Panc1 (cell line): ENCODE measurements at regions of chr11 and their contacts with region 1.

Region 1: DNA sequence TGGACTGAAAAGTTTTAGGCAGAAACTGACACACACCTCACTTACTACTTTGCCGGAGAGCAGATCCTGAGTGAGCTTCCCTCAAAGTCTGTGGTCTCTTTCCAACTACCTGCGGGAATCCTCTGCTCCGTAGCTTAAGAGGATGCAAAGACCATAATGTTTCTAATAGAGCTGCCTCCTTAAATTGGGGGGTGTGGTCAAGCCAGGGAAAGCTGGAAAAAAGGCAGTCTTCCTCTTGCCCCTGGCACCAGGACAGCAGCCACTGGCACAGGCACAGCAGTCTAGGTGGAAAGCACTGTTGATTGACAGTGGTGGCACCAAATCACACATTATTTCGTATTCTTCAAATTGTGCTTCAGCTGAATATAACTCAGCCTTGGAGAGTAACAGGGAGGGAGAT is at the start of gene ETS1:
- DNase-seq: no peak
- ATAC-seq: peak; percentile 66
- H3K4me3 ChIP-seq: peak within 1 kb of the TSS in 1 of 2 experiments; percentile 34; a peak in 2 of 4 replicates
- H3K27ac ChIP-seq: no peak within 1 kb of the TSS
- H3K4me1 ChIP-seq: no peaks in the 10 kb centered on the region
- H3K27me3 ChIP-seq: peaks cover 51% of the 10 kb centered on the region
- CTCF ChIP-seq: no peak
- total RNA-seq, gene ETS1: 66.4 TPM

Region 2: DNA sequence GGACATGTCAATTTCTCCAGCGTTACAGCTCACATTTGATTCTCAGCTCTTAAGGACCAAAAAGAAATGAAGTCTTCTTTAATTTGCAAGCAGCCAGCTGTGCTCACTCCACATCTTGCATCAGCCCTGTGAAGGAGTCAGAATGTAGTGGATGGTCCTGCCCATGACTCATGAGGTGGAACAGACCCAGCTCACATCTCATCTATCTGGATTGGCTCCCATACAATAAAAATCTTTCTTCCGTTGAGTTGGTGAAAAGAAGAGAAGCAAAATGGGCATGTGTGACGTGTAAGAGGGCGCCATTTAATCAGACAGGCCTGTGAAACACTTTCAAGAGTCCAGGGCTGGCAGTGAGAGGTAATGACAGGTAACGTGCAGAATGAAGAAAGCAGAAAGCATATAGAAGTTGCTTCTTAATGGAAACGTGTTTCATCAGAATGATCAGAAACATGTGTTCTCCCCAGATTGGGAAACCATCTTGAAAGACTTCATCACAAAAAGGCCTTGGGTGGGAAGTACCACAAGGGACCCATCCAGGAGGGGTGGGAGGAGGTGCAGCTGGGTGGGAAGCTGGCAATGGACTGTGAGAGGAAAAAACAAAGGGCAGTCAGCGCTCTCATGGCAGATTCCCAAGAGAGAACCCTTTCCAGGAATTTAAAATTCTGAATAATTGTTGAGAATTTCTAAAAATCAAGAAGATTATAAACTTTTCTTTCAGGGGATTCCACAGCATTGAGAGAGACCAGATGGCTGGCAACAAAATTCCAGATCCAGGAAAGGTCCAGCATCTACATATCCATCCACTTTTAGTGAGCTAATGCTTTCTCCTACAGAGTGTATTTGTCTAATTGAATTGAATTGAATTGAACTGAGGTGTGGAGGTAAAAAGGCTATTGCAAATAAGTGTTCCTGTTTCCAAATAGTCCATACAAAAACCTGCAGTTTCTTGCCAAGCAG is 57.1 kb before region 1 on chr11:
- CTCF ChIA-PET with region 1: no interaction called
- POLR2A ChIA-PET with region 1: no interaction called
- in situ Hi-C with region 1: no loop called
- intact Hi-C with region 1: loop called (anchors 2 kb)
- DNase-seq: no peak
- ATAC-seq: no peak
- H3K4me3 ChIP-seq: no peak overlapping the region
- H3K27ac ChIP-seq: no peak overlapping the region
- H3K4me1 ChIP-seq: no peaks in the 10 kb centered on the region
- H3K27me3 ChIP-seq: no peaks in the 10 kb centered on the region
- CTCF ChIP-seq: no peak